Naive thymus-derived CD4-positive, alpha-beta T cell (primary cell): ENCODE measurements at regions of chr3 and their contacts with region 1.

Region 1: GRCh38 chr3:160399125-160400029 is at the starts of genes IFT80 and SMC4:
- DNase-seq: peak; percentile 91 to 98 (median 96)
- ATAC-seq: peak; percentile 98
- H3K4me3 ChIP-seq: peak within 1 kb of the TSS; percentile 86
- H3K4me3 Mint-ChIP-seq: peak within 1 kb of the TSS; percentile 86 to 99 (median 98)
- H3K27ac ChIP-seq: peak within 1 kb of the TSS; percentile 88
- H3K27ac Mint-ChIP-seq: peak within 1 kb of the TSS; percentile 98 to 100 (median 100)
- H3K4me1 ChIP-seq: peaks cover 11 to 23% of the 10 kb centered on the region in 2 donors
- H3K4me1 Mint-ChIP-seq: peaks cover 24 to 64% (median 57%) of the 10 kb centered on the region in 7 donors
- H3K27me3 ChIP-seq: peaks cover 0 to 4% of the 10 kb centered on the region in 2 donors
- H3K27me3 Mint-ChIP-seq: peaks cover 5 to 19% (median 9%) of the 10 kb centered on the region in 5 donors
- total RNA-seq, gene IFT80: 19.6 to 36.2 (median 30.4) TPM
- total RNA-seq, gene SMC4: 37.4 to 185 (median 47.9) TPM

Region 2: DNA sequence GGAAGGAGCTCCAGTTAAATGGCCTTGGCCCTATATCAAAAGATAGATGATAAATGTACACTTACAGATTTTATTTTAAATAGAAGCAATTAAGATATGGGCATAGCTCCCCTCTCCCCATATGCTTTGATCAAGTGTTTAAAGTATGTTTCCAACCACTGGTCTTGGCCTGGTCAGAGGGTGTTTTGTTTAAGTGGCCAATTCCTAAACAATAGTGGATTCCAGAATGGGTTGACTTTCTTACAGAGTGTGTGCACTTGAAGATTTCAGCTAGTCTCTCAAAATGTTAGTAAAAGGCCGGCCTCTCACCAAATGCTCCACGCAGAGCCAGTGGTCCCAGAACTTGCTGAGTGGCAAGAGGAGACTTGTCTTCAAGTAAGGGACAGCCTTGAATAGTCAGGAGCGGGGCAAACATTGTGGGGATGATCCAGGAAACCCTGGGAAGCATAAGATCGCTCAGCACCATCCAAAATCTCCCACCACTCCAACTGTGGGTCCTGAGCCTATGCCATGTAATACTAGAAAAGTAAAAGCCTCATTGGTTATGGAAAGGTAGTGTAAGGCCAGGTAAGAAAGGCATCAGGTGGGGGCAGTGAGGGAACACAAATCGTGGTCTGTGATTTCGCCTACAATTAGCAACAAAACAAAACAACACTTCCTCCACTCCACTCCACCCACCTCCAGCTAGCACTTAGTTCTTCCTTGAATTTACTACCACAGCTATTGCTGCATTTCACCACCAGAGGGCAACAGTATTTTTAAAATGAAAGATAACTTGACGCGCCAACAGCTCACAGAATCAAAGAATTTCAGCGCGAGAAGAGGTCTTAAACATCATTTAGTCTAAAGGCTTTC is 1671.9 kb before region 1 on chr3:
- CTCF ChIA-PET with region 1: no interaction called
- POLR2A ChIA-PET with region 1: no interaction called
- intact Hi-C with region 1: loop called (anchors 2 to 5 kb)
- DNase-seq: peak in 7 of 9 donors; percentile 35 to 74 (median 63)
- ATAC-seq: peak; percentile 79
- H3K4me3 ChIP-seq: peak overlapping the region; percentile 18
- H3K4me3 Mint-ChIP-seq: peak overlapping the region in 9 of 10 donors; percentile 42 to 75 (median 64)
- H3K27ac ChIP-seq: no peak overlapping the region
- H3K27ac Mint-ChIP-seq: peak overlapping the region; percentile 51 to 95 (median 90)
- H3K4me1 ChIP-seq: peaks cover 10% of the 10 kb centered on the region in 2 donors
- H3K4me1 Mint-ChIP-seq: peaks cover 10 to 62% (median 30%) of the 10 kb centered on the region in 7 donors
- H3K27me3 ChIP-seq: no peaks in the 10 kb centered on the region
- H3K27me3 Mint-ChIP-seq: peaks cover 0 to 4% (median 0%) of the 10 kb centered on the region in 5 donors

Region 3: GRCh38 chr3:159988617-159989271 is 410.6 kb before region 1 on chr3 and contains the start of gene IL12A:
- CTCF ChIA-PET with region 1: no interaction called
- POLR2A ChIA-PET with region 1: no interaction called
- intact Hi-C with region 1: loop called (anchors 5 kb)
- DNase-seq: peak; percentile 59 to 85 (median 75)
- ATAC-seq: peak; percentile 98
- H3K4me3 ChIP-seq: peak within 1 kb of the TSS; percentile 56
- H3K4me3 Mint-ChIP-seq: peak within 1 kb of the TSS; percentile 82 to 89 (median 84)
- H3K27ac ChIP-seq: peak within 1 kb of the TSS; percentile 32
- H3K27ac Mint-ChIP-seq: peak within 1 kb of the TSS in 5 of 9 donors; percentile 58 to 65 (median 62)
- H3K4me1 ChIP-seq: peaks cover 6 to 9% of the 10 kb centered on the region in 2 donors
- H3K4me1 Mint-ChIP-seq: peaks cover 6 to 33% (median 15%) of the 10 kb centered on the region in 7 donors
- H3K27me3 ChIP-seq: no peaks in the 10 kb centered on the region
- H3K27me3 Mint-ChIP-seq: peaks cover 0 to 24% (median 10%) of the 10 kb centered on the region in 5 donors
- total RNA-seq, gene IL12A: 0.40 to 1.8 (median 1.3) TPM

Region 4: DNA sequence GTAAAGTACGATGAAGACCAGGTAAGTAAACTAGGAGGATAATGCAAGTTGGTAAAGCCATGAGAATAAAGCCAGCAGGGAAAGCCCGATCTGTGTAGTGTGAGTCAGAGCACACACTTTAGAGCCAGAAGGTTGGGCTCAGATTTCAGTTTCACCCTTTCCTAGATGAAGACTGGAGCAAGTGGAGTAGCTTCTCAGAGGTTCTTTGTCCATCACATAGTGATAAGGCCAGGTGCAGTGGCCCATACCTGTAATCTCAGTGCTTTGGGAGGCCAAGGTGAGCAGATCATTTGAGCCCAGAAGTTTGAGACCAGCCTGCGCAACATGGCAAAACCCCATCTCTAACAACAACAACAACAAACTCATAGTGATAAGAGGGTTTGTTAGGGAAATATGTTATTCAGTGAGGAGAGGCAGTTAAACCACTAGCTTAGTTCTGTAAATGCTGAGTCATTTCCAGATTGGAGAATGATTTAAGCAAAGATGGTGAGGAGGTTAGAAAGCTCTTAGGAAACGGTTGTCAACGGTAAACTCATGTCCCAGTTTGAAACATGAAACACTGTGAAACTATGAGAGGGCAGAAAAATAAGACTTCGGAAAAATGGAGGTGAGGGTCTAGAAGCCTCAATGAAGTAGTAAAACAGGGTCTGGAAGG is 371.7 kb before region 1 on chr3:
- CTCF ChIA-PET with region 1: no interaction called
- POLR2A ChIA-PET with region 1: no interaction called
- intact Hi-C with region 1: loop called in 1 of 2 experiments (anchors 2 kb)
- DNase-seq: peak in 1 of 9 donors; percentile 36
- ATAC-seq: peak; percentile 22
- H3K4me3 ChIP-seq: no peak overlapping the region
- H3K4me3 Mint-ChIP-seq: peak overlapping the region in 1 of 10 donors; percentile 54
- H3K27ac ChIP-seq: no peak overlapping the region
- H3K27ac Mint-ChIP-seq: peak overlapping the region in 2 of 9 donors; percentile 28 to 88
- H3K4me1 ChIP-seq: no peaks in the 10 kb centered on the region
- H3K4me1 Mint-ChIP-seq: peaks cover 0 to 33% (median 0%) of the 10 kb centered on the region in 7 donors
- H3K27me3 ChIP-seq: no peaks in the 10 kb centered on the region
- H3K27me3 Mint-ChIP-seq: no peaks in the 10 kb centered on the region

Region 5: DNA sequence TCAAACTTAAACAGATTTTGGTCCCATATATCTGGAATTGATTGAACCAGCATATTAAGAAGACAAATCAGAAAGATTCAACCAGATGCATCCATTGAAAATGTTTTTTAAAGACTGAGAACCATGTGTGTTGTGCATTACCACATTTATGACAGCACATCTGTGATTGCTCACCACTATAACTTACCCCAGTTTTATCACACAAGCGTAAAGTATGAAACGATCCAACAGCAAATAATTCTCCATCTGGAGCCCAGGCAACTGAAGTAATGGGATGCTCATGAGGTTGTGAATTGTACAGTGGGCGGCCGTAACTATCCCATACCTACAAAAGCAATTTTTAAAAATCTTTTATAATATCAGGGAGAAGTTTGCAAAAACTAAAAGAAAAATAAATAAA is 43.6 kb before region 1 on chr3:
- CTCF ChIA-PET with region 1: no interaction called
- POLR2A ChIA-PET with region 1: no interaction called
- intact Hi-C with region 1: no loop called
- DNase-seq: no peak
- ATAC-seq: no peak
- H3K4me3 ChIP-seq: no peak overlapping the region
- H3K4me3 Mint-ChIP-seq: no peak overlapping the region
- H3K27ac ChIP-seq: no peak overlapping the region
- H3K27ac Mint-ChIP-seq: no peak overlapping the region
- H3K4me1 ChIP-seq: no peaks in the 10 kb centered on the region
- H3K4me1 Mint-ChIP-seq: no peaks in the 10 kb centered on the region
- H3K27me3 ChIP-seq: no peaks in the 10 kb centered on the region
- H3K27me3 Mint-ChIP-seq: no peaks in the 10 kb centered on the region

Region 6: DNA sequence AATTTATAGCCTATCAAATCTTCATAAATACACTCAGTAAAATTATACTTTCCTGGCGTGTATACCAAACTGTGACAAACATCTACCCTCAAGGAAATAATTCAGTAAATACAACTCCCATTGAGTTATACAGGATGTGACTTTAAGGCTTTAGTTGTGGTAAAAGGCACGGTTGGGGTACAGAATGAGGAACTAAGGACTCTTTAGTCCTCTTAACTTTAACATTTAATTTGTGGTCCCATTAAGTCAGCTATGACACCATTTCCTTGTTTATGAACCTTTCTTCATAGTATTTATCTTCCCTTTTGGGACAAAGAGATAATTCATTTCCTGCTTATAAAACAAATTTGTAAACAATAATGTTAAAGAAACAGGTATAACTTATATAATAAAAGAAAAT is 30.6 kb before region 1 on chr3:
- CTCF ChIA-PET with region 1: no interaction called
- POLR2A ChIA-PET with region 1: interaction called, 5 read pairs
- intact Hi-C with region 1: loop called in 1 of 2 experiments (anchors 1 kb)
- DNase-seq: peak in 6 of 9 donors; percentile 8 to 52 (median 32)
- ATAC-seq: peak; percentile 79
- H3K4me3 ChIP-seq: no peak overlapping the region
- H3K4me3 Mint-ChIP-seq: peak overlapping the region in 7 of 10 donors; percentile 8 to 67 (median 42)
- H3K27ac ChIP-seq: no peak overlapping the region
- H3K27ac Mint-ChIP-seq: peak overlapping the region in 5 of 9 donors; percentile 18 to 79 (median 69)
- H3K4me1 ChIP-seq: peaks cover 0 to 7% of the 10 kb centered on the region in 2 donors
- H3K4me1 Mint-ChIP-seq: peaks cover 8 to 46% (median 37%) of the 10 kb centered on the region in 7 donors
- H3K27me3 ChIP-seq: no peaks in the 10 kb centered on the region
- H3K27me3 Mint-ChIP-seq: no peaks in the 10 kb centered on the region

Region 7: DNA sequence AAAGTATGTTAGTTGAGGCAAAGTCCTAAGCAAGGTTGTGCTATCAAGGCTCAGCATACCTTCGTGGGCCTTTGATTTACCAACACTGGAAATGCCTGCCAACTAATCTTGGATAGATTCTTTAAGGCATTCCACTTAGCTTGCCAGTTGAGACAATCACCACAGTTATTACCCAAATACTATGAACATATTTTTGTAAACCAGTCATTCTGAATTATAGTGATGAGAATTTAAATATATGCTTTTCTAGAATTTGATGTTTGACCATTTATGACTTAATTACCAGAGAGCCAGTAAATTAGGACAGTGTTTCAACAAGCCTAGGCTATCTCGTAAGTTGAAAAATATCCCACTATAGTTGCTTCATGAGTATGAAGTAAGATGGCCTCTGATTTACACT is 34.7 kb after region 1 on chr3:
- CTCF ChIA-PET with region 1: no interaction called
- POLR2A ChIA-PET with region 1: no interaction called
- intact Hi-C with region 1: no loop called
- DNase-seq: no peak
- ATAC-seq: no peak
- H3K4me3 ChIP-seq: no peak overlapping the region
- H3K4me3 Mint-ChIP-seq: no peak overlapping the region
- H3K27ac ChIP-seq: no peak overlapping the region
- H3K27ac Mint-ChIP-seq: no peak overlapping the region
- H3K4me1 ChIP-seq: peaks cover 0 to 5% of the 10 kb centered on the region in 2 donors
- H3K4me1 Mint-ChIP-seq: peaks cover 20 to 42% (median 33%) of the 10 kb centered on the region in 7 donors
- H3K27me3 ChIP-seq: no peaks in the 10 kb centered on the region
- H3K27me3 Mint-ChIP-seq: no peaks in the 10 kb centered on the region

Region 8: GRCh38 chr3:160449636-160450598 is 50.5 kb after region 1 on chr3 and contains the start of gene TRIM59:
- CTCF ChIA-PET with region 1: no interaction called
- POLR2A ChIA-PET with region 1: interaction called, 12 read pairs
- intact Hi-C with region 1: loop called (anchors 1 kb)
- DNase-seq: peak; percentile 90 to 96 (median 93)
- ATAC-seq: peak; percentile 97
- H3K4me3 ChIP-seq: peak within 1 kb of the TSS; percentile 90
- H3K4me3 Mint-ChIP-seq: peak within 1 kb of the TSS; percentile 92 to 100 (median 96)
- H3K27ac ChIP-seq: peak within 1 kb of the TSS; percentile 74
- H3K27ac Mint-ChIP-seq: peak within 1 kb of the TSS; percentile 88 to 96 (median 92)
- H3K4me1 ChIP-seq: peaks cover 10 to 14% of the 10 kb centered on the region in 2 donors
- H3K4me1 Mint-ChIP-seq: peaks cover 8 to 47% (median 40%) of the 10 kb centered on the region in 7 donors
- H3K27me3 ChIP-seq: no peaks in the 10 kb centered on the region
- H3K27me3 Mint-ChIP-seq: peaks cover 0 to 8% (median 0%) of the 10 kb centered on the region in 5 donors
- total RNA-seq, gene TRIM59: 9.8 to 49.2 (median 17.5) TPM

Region 9: GRCh38 chr3:161220850-161221753 is 821.7 kb after region 1 on chr3 and contains the start of gene NMD3:
- CTCF ChIA-PET with region 1: no interaction called
- POLR2A ChIA-PET with region 1: interaction called, 4 read pairs
- intact Hi-C with region 1: loop called (anchors 1 to 2 kb)
- DNase-seq: peak; percentile 84 to 92 (median 89)
- ATAC-seq: peak; percentile 98
- H3K4me3 ChIP-seq: peak within 1 kb of the TSS; percentile 86
- H3K4me3 Mint-ChIP-seq: peak within 1 kb of the TSS; percentile 87 to 96 (median 93)
- H3K27ac ChIP-seq: peak within 1 kb of the TSS; percentile 97
- H3K27ac Mint-ChIP-seq: peak within 1 kb of the TSS; percentile 89 to 98 (median 94)
- H3K4me1 ChIP-seq: peaks cover 18 to 21% of the 10 kb centered on the region in 2 donors
- H3K4me1 Mint-ChIP-seq: peaks cover 12 to 52% (median 36%) of the 10 kb centered on the region in 7 donors
- H3K27me3 ChIP-seq: no peaks in the 10 kb centered on the region
- H3K27me3 Mint-ChIP-seq: peaks cover 4 to 22% (median 11%) of the 10 kb centered on the region in 5 donors
- total RNA-seq, gene NMD3: 37.3 to 52.6 (median 40.7) TPM